ENCODE measurements at regions of chr1 and their contacts with region 1.

Region 1: DNA sequence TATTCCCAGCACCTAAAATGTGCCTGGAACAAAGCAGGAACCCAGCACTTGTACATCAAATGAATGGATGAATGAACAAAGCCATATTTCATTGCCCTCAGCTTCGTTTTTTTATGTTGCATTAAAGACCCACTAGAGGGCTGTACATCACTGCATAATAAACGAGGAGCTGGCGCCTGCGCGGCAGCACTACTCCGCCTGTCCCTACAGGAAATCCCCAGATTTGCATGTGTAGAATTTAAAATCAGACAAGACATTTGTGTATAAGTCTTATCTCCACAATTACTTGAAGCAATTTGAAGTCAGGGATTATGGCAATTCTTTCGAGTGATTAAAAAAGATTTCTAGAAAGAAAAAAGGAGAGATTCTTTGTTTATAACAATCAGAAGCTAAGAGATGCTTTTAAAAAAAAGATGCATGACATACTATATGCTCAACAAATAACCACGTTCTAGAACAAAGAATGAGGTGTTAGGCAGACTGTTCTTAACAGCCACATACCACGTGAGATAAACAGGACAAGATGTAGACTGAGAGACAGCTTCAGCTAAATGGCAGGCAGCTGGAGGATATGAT is 5.4 kb upstream of the NEK2 start:
- DNase-seq: peak; percentile 44 to 85 (median 78)
- ATAC-seq: peak; percentile 98
- H3K4me3 ChIP-seq: no peak overlapping the region
- H3K4me3 Mint-ChIP-seq: peak overlapping the region in 9 of 10 donors; percentile 19 to 59 (median 50)
- H3K27ac ChIP-seq: peak overlapping the region; percentile 66
- H3K27ac Mint-ChIP-seq: peak overlapping the region; percentile 79 to 95 (median 87)
- H3K4me1 ChIP-seq: peaks cover 10 to 11% of the 10 kb centered on the region in 2 donors
- H3K4me1 Mint-ChIP-seq: peaks cover 9 to 22% (median 14%) of the 10 kb centered on the region in 7 donors
- H3K27me3 ChIP-seq: no peaks in the 10 kb centered on the region
- H3K27me3 Mint-ChIP-seq: no peaks in the 10 kb centered on the region

Region 2: DNA sequence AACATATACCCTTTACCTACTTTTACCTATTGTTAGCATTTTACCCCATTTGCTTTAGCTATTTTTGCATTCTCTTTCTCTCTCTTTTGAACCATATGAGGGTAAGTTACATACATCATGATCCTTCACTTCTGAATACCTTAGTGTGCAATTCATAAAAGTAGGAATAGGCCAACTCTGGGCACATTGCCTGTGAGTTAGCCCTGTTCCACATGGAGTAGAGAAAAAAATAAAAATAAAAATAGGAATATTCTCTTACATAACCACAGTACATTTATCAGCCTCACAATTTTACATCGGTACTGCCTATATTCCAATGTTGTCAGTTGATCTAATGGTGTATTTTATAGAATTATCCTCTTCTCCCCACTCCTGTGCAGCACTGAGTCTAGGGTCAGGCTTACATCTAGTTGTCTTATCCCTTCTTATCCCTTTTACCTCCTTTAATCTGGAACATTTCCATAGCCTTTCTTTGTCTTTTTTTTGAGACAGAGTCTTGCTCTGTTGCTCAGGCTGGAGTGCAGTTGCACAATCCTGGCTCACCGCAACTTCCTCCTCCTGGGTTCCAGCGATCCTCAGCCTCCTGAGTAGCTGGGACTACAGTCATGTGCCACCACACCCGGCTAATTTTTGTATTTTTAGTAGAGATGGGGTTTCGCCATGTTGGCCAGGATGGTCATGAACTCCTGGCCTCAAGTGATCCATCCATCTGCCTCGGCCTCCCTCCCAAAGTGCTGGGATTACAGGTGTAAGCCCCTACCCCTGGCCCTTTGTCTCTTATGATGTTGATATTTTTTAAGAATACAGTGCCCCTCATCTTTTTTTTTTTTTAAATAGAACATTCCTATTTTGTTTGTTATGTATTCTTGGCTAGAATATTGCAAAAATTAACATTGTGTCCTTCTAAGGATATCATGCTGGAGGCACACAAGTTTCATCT is 90.8 kb before region 1 on chr1:
- CTCF ChIA-PET with region 1: no interaction called
- POLR2A ChIA-PET with region 1: no interaction called
- intact Hi-C with region 1: no loop called
- DNase-seq: no peak
- ATAC-seq: peak; percentile 67
- H3K4me3 ChIP-seq: no peak overlapping the region
- H3K4me3 Mint-ChIP-seq: no peak overlapping the region
- H3K27ac ChIP-seq: no peak overlapping the region
- H3K27ac Mint-ChIP-seq: no peak overlapping the region
- H3K4me1 ChIP-seq: no peaks in the 10 kb centered on the region
- H3K4me1 Mint-ChIP-seq: peaks cover 0 to 6% (median 0%) of the 10 kb centered on the region in 7 donors
- H3K27me3 ChIP-seq: no peaks in the 10 kb centered on the region
- H3K27me3 Mint-ChIP-seq: peaks cover 0 to 24% (median 3%) of the 10 kb centered on the region in 5 donors

Region 3: DNA sequence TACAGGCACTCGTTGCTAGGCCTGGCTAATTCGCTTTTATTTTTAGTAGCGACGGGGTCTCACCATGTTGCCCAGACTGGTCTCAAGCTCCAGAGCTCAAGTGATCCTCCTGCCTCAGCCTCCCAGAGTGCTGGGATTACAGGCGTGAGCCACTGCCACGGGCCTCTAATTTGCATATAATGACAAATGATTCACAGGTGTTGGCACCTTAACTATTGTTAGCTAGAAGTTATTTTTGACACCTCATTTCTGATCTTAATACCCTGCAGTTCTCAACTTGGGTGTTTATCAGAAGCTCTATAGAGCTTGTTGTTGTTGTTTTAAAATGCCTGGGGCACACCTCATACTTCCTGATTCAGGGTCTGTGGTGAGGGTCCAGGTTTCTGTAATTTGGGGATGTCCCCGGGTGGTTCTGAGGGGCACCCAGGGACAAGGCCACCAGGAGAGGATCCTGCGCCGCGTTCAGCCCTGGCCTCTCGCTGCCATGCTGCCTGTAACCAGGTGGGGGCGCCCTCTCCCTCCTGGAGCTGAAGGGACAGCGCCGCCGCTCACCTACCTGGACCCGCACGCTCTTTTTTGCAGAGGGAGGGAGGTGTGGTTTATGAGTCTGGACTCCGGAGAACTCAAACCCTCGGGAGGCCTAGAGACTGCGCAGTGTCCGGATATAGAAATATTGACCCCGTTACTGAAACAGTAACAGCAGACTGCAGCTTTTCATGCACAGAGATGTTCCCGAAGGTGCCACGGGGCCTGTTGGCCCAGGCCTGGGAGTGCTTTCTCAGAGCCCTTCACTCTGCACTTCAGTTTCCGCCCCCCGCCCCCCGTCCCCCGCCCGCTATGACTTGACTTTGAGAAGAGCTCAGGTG is 17.6 kb after region 1 on chr1:
- CTCF ChIA-PET with region 1: interaction called, 14 read pairs
- POLR2A ChIA-PET with region 1: interaction called, 3 read pairs
- intact Hi-C with region 1: loop called in 1 of 2 experiments (anchors 1 kb)
- DNase-seq: peak; percentile 60 to 87 (median 72)
- ATAC-seq: peak; percentile 96
- H3K4me3 ChIP-seq: no peak overlapping the region
- H3K4me3 Mint-ChIP-seq: peak overlapping the region; percentile 23 to 83 (median 65)
- H3K27ac ChIP-seq: no peak overlapping the region
- H3K27ac Mint-ChIP-seq: peak overlapping the region in 2 of 9 donors; percentile 5 to 62
- H3K4me1 ChIP-seq: peaks cover 4 to 16% of the 10 kb centered on the region in 2 donors
- H3K4me1 Mint-ChIP-seq: peaks cover 0 to 42% (median 9%) of the 10 kb centered on the region in 7 donors
- H3K27me3 ChIP-seq: no peaks in the 10 kb centered on the region
- H3K27me3 Mint-ChIP-seq: peaks cover 0 to 37% (median 0%) of the 10 kb centered on the region in 5 donors

Region 4: DNA sequence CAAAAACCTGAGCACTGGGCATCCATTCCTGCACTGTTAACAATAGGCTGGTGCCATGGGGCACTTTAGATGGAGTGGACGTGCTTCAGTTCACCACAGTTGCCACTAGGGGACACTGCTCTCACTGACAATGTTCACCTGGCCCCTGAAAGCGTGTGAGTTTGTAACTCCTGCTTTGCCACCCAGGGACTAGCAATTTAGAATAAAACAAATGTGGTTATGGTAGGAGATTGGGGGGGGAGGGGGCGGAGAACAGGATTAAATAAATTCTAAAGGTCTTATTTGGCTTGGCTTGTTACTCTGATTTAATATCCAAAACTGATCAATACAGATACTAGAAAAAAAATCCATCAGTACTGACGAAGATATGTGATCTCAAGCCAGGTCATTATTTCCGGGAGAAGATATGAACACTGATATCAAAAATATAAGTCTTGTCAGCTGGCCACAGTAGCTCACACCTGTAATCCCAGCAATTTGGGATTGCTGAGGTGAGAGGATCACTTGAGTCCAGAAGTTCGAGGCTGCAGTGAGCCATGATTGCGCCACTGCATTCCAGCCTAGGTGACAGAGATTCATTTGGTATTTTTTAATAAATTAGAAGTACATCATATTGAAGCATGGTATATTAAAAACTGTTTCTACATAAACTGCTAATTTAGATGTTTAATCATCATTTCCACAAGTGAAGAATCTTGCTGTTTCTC is 331.3 kb after region 1 on chr1:
- CTCF ChIA-PET with region 1: interaction called, 4 read pairs
- POLR2A ChIA-PET with region 1: no interaction called
- intact Hi-C with region 1: loop called (anchors 1 kb)
- DNase-seq: peak; percentile 16 to 55 (median 46)
- ATAC-seq: peak; percentile 100
- H3K4me3 ChIP-seq: no peak overlapping the region
- H3K4me3 Mint-ChIP-seq: no peak overlapping the region
- H3K27ac ChIP-seq: no peak overlapping the region
- H3K27ac Mint-ChIP-seq: no peak overlapping the region
- H3K4me1 ChIP-seq: no peaks in the 10 kb centered on the region
- H3K4me1 Mint-ChIP-seq: peaks cover 0 to 3% (median 0%) of the 10 kb centered on the region in 7 donors
- H3K27me3 ChIP-seq: no peaks in the 10 kb centered on the region
- H3K27me3 Mint-ChIP-seq: no peaks in the 10 kb centered on the region

Region 5: DNA sequence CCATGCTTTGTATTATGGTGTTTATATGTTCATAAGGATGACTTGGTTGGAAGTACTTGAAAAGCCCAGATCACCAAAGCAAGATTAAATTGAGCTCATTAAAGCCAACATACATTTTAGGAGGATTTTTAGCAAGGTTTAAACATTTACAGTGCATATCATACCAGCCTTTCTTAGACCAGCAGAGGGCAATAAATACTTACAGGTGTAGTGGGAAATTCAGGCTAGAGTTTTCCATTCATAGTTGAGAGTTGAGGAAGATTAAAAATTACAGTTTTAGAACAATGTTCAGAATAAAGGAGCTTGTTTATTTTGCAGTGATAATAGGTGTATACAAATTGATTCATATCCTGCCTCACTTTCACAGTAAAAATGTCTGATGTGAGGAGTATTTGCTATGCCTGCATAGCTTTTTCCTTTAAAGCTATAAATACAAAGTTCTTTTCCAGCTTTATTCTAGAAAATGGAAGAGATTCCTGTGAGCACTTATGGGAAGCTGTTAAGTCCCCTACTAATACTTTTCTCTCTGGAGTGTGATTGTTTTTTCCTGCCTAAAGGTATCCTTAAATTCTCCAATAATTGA is 390.0 kb after region 1 on chr1:
- CTCF ChIA-PET with region 1: interaction called, 10 read pairs
- POLR2A ChIA-PET with region 1: no interaction called
- intact Hi-C with region 1: loop called (anchors 2 kb)
- DNase-seq: peak in 7 of 9 donors; percentile 11 to 63 (median 47)
- ATAC-seq: peak; percentile 66
- H3K4me3 ChIP-seq: no peak overlapping the region
- H3K4me3 Mint-ChIP-seq: no peak overlapping the region
- H3K27ac ChIP-seq: no peak overlapping the region
- H3K27ac Mint-ChIP-seq: no peak overlapping the region
- H3K4me1 ChIP-seq: no peaks in the 10 kb centered on the region
- H3K4me1 Mint-ChIP-seq: peaks cover 0 to 7% (median 0%) of the 10 kb centered on the region in 7 donors
- H3K27me3 ChIP-seq: no peaks in the 10 kb centered on the region
- H3K27me3 Mint-ChIP-seq: no peaks in the 10 kb centered on the region

Region 6: GRCh38 chr1:212368073-212368484 is 687.2 kb after region 1 on chr1:
- CTCF ChIA-PET with region 1: interaction called, 4 read pairs
- POLR2A ChIA-PET with region 1: no interaction called
- intact Hi-C with region 1: loop called (anchors 1 kb)
- DNase-seq: peak in 7 of 9 donors; percentile 34 to 67 (median 63)
- ATAC-seq: peak; percentile 95
- H3K4me3 ChIP-seq: no peak overlapping the region
- H3K4me3 Mint-ChIP-seq: no peak overlapping the region
- H3K27ac ChIP-seq: no peak overlapping the region
- H3K27ac Mint-ChIP-seq: peak overlapping the region in 4 of 9 donors; percentile 5 to 87 (median 52)
- H3K4me1 ChIP-seq: no peaks in the 10 kb centered on the region
- H3K4me1 Mint-ChIP-seq: peaks cover 0 to 9% (median 0%) of the 10 kb centered on the region in 7 donors
- H3K27me3 ChIP-seq: no peaks in the 10 kb centered on the region
- H3K27me3 Mint-ChIP-seq: no peaks in the 10 kb centered on the region

Region 7: DNA sequence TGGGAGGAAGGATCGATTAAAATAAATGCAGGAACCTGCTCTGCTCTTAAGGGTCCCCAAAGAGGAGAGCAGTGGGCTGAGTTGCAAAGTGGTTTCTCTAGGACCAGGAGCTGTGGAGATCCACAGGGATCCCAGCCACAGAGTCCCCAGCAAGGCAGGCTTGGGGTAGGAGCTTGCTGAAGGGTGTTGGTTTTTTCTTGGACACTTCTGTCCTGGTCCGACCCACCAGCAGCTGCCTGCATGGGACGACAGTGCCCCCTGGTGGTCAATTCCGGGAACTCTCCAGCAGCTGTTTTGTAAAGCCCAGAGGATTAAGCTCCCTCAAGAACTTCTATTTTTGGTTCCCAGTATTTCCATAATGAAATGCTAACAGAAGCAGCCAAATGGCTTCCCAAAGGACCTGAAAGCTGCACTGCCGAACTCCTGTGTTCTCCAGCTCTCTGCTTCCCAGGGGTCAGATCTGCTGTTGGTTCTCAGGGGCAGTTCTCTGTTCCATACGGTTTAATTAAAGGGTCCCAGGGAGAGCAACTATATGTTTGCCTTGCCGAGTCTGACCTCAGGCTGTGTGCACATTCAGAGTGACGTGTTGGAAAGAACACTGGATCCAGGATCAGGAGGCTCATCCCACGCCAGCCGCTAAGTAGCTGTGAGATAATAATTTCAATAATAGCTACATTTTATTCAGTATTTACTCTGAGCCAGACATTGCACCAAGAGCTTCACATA is 775.1 kb after region 1 on chr1:
- CTCF ChIA-PET with region 1: interaction called, 60 read pairs
- POLR2A ChIA-PET with region 1: interaction called, 4 read pairs
- intact Hi-C with region 1: loop called in 1 of 2 experiments (anchors 1 kb)
- DNase-seq: peak; percentile 53 to 84 (median 69)
- ATAC-seq: peak; percentile 84
- H3K4me3 ChIP-seq: no peak overlapping the region
- H3K4me3 Mint-ChIP-seq: no peak overlapping the region
- H3K27ac ChIP-seq: no peak overlapping the region
- H3K27ac Mint-ChIP-seq: no peak overlapping the region
- H3K4me1 ChIP-seq: no peaks in the 10 kb centered on the region
- H3K4me1 Mint-ChIP-seq: peaks cover 0 to 12% (median 0%) of the 10 kb centered on the region in 7 donors
- H3K27me3 ChIP-seq: no peaks in the 10 kb centered on the region
- H3K27me3 Mint-ChIP-seq: no peaks in the 10 kb centered on the region